ENCODE measurements at regions of chr4 and their contacts with region 1.

Region 1: GRCh38 chr4:3292571-3293400 is at the start of gene RGS12:
- DNase-seq: peak; percentile 94 to 96
- ATAC-seq: peak; percentile 94 to 97 (median 96)
- H3K4me3 ChIP-seq: peak within 1 kb of the TSS; percentile 64 to 98 (median 82)
- H3K27ac ChIP-seq: peak within 1 kb of the TSS; percentile 87 to 98 (median 94)
- H3K4me1 ChIP-seq: peaks cover 9 to 52% (median 22%) of the 10 kb centered on the region in 9 donors
- H3K27me3 ChIP-seq: peaks cover 0 to 5% (median 0%) of the 10 kb centered on the region in 7 donors
- CTCF ChIP-seq: no peak
- total RNA-seq, gene RGS12: 9.7 to 24.3 (median 13.1) TPM

Region 2: GRCh38 chr4:3220476-3221183 is 72.2 kb before region 1 on chr4:
- intact Hi-C with region 1: loop called in 1 of 10 experiments (anchors 5 kb)
- DNase-seq: no peak
- ATAC-seq: peak in 4 of 8 donors; percentile 10 to 33 (median 16)
- H3K4me3 ChIP-seq: no peak overlapping the region
- H3K27ac ChIP-seq: peak overlapping the region in 2 of 10 donors; percentile 50 to 59
- H3K4me1 ChIP-seq: peaks cover 0 to 22% (median 6%) of the 10 kb centered on the region in 9 donors
- H3K27me3 ChIP-seq: no peaks in the 10 kb centered on the region
- CTCF ChIP-seq: no peak

Region 3: GRCh38 chr4:3388471-3389232 is 95.9 kb after region 1 on chr4:
- intact Hi-C with region 1: loop called in 1 of 10 experiments (anchors 5 kb)
- DNase-seq: peak in 1 of 2 donors; percentile 16
- ATAC-seq: peak in 7 of 8 donors; percentile 4 to 46 (median 17)
- H3K4me3 ChIP-seq: peak overlapping the region in 9 of 10 donors; percentile 17 to 52 (median 37)
- H3K27ac ChIP-seq: peak overlapping the region; percentile 24 to 90 (median 66)
- H3K4me1 ChIP-seq: peaks cover 2 to 62% (median 51%) of the 10 kb centered on the region in 9 donors
- H3K27me3 ChIP-seq: no peaks in the 10 kb centered on the region
- CTCF ChIP-seq: no peak